ENCODE measurements at regions of chr7 and their contacts with region 1.

Region 1: DNA sequence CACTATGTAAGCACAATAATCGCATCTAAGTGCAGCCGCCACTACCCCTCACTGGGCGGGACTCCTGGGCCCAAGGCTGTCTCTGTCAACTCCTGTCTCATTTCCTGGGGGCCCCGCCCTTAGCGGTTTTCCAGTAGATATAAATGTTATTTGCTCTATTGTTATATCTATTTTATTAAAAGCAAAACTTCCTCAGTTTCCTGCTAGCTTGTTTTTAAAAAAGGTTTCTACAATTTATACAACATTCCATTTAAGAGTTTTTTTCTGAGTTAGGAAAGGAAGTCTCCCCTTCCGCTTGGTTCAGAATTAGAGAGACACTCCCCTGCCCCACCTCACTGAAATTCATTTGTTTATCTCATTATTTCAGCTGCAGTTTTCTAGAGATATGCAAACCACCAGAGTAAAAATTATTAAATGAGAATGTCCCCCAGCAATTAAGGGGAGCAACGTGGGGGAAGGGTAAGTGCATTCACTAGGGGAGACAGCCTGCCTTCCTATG is 82.7 kb downstream of the RAMP3 start:
- DNase-seq: no peak
- ATAC-seq: no peak

Region 2: GRCh38 chr7:43314379-43315189 is 1925.7 kb before region 1 on chr7:
- intact Hi-C with region 1: loop called (anchors 5 kb)
- DNase-seq: no peak
- ATAC-seq: no peak

Measured in sciatic nerve (tissue), 2 donors.